Cardiac septum (tissue), 1 donor: ENCODE measurements at regions of chr2 and their contacts with region 1.

Region 1: DNA sequence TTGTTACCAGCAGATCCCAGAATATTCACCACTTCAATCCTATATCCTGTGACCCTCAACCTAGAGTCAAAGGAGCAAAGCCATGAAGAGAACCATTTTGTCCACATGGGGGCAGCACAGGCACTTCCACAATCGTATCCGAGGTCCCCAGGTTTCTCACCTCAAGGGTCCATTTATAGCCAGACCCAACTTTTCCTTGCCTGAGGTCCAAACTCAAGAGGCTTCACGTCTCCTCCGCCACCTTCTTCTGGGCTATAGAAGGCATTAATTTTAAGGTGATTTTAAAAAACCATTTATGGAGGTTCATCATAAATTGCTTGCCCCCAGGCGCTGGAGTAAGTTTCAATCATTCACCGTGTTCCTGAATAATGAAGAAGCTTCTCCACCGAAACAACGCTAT is 111.6 kb upstream of the NABP1 start:
- DNase-seq: no peak

Region 2: GRCh38 chr2:191693778-191694177 is 127.4 kb after region 1 on chr2:
- intact Hi-C with region 1: loop called (anchors 2 kb)
- DNase-seq: no peak

Region 3: DNA sequence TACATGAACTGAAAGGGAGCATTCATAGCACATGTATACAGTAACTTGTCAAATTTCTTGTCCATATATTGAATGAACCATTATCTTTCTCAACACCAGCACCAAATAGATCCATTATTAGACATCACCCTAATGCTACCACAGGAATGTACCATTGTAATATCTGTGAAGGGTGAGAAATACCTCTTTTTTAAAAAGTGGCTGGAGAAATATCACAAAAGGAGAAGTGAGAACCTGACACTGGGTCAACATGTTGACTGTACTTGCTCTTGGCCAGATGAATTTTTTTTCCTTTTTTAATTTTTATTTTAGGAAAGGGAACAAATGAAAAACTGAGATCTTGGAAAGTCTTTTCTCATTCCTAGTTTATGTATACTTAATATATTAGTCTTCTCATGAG is 217.1 kb after region 1 on chr2:
- intact Hi-C with region 1: no loop called
- DNase-seq: no peak